ENCODE measurements at regions of chr17 and their contacts with region 1.

Region 1: DNA sequence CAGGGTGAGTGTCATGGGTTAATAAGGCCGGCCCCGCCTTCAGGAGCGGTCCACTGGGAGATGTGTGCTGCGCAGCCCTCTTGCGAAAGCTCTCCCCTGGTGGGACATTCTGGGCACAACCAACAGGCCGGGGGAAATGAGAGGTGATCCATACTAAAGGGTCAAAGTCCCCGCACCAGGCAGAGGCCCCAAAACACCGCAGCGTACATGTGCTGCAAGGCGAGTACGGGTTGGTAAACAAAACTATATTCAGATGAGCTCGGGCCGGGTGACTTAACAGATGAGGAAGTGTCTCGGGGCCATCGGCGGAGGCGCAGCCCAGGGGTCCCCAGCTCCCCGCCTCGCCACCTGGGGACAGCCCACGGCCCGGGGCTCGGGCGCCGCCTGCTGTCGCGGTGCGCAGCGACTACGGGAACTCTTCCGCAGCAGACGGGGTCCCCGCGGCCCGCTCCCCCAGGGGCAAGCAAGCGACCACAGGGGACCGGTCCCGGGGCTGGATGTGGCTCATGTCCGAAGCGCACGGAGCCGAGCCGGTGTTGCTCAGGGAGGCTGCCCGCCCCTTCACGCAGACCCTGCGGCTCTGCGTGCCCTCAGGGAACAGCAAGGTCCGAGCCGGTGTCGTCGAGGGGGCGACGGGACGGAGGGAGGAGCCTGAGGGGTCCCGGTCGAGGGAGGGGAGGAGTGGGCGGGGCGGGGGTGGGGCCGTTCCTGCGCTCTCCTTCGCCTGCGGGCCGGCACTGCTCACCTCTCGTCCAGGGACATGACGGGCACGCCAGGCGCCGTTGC is at the start of gene RAB37:
- DNase-seq: peak; percentile 60 to 86 (median 83)
- ATAC-seq: peak; percentile 54 to 67
- H3K4me3 ChIP-seq: peak within 1 kb of the TSS; percentile 23
- H3K27ac ChIP-seq: no peak within 1 kb of the TSS
- H3K4me1 ChIP-seq: no peaks in the 10 kb centered on the region
- H3K27me3 ChIP-seq: no peaks in the 10 kb centered on the region
- total RNA-seq, gene RAB37: 1.1 to 3.4 (median 1.2) TPM

Region 2: GRCh38 chr17:74659898-74660297 is 76.8 kb before region 1 on chr17:
- intact Hi-C with region 1: loop called in 2 of 4 experiments (anchors 5 kb)
- DNase-seq: no peak
- ATAC-seq: no peak
- H3K4me3 ChIP-seq: no peak overlapping the region
- H3K27ac ChIP-seq: no peak overlapping the region
- H3K4me1 ChIP-seq: no peaks in the 10 kb centered on the region
- H3K27me3 ChIP-seq: peaks cover 3% of the 10 kb centered on the region

Region 3: GRCh38 chr17:74790161-74791054 is 53.7 kb after region 1 on chr17:
- intact Hi-C with region 1: no loop called
- DNase-seq: no peak
- ATAC-seq: peak in 1 of 2 donors; percentile 4
- H3K4me3 ChIP-seq: no peak overlapping the region
- H3K27ac ChIP-seq: no peak overlapping the region
- H3K4me1 ChIP-seq: no peaks in the 10 kb centered on the region
- H3K27me3 ChIP-seq: no peaks in the 10 kb centered on the region

Region 4: GRCh38 chr17:74842599-74843351 is 106.1 kb after region 1 on chr17:
- intact Hi-C with region 1: no loop called
- DNase-seq: peak; percentile 82 to 95 (median 94)
- ATAC-seq: peak; percentile 72 to 77
- H3K4me3 ChIP-seq: peak overlapping the region; percentile 33
- H3K27ac ChIP-seq: no peak overlapping the region
- H3K4me1 ChIP-seq: peaks cover 12% of the 10 kb centered on the region
- H3K27me3 ChIP-seq: no peaks in the 10 kb centered on the region

Measured in right cardiac atrium (tissue), 5 donors.